ENCODE measurements at regions of chr2 and their contacts with region 1.

Region 1: DNA sequence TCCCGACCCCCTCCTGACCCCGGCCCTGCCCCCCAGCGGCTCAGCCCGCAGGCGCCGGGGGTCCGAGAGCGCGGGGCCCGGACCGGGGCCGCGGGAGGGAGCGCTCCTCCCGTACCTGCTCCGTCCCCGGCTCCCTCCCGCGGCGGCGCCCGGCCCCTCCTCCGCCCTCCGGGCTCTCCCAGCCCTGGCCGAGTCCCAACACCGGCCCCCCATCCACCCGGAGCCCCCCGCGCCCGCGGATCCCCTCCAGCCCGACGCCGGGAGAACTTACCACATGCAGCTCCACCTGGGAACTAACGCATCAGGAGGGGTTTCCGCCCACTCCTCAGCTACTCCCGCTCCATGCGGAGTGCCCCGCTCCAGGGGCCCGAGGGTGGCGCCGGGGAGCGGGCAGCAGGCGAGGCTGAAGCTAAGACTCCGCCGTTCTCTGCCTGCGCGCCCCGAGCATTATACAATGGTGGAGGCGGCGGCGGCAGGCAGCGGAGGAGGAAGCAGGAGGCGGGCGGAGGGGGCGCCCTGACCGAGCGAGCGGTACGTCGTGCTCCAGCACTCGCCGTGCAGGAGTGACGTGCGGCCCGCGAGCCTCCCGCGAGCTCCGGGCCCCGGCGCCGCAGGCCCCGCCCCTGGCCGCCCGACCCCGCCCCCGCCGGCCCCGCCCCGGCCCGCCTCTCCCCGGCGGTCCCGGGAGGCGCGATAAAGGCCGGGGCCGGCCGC is at the start of gene SERTAD2:
- DNase-seq: peak; percentile 91 to 96 (median 93)
- ATAC-seq: peak; percentile 75 to 93 (median 91)
- H3K4me3 ChIP-seq: peak within 1 kb of the TSS; percentile 74 to 95 (median 90)
- H3K27ac ChIP-seq: peak within 1 kb of the TSS; percentile 96 to 100 (median 99)
- H3K4me1 ChIP-seq: peaks cover 0 to 69% (median 41%) of the 10 kb centered on the region in 12 donors
- H3K27me3 ChIP-seq: no peaks in the 10 kb centered on the region
- CTCF ChIP-seq: peak in 5 of 12 donors; percentile 7 to 34 (median 16)
- POLR2A ChIP-seq: peak in 1 of 2 donors; percentile 79
- total RNA-seq, gene SERTAD2: 12.2 to 21.6 (median 16.1) TPM

Region 2: DNA sequence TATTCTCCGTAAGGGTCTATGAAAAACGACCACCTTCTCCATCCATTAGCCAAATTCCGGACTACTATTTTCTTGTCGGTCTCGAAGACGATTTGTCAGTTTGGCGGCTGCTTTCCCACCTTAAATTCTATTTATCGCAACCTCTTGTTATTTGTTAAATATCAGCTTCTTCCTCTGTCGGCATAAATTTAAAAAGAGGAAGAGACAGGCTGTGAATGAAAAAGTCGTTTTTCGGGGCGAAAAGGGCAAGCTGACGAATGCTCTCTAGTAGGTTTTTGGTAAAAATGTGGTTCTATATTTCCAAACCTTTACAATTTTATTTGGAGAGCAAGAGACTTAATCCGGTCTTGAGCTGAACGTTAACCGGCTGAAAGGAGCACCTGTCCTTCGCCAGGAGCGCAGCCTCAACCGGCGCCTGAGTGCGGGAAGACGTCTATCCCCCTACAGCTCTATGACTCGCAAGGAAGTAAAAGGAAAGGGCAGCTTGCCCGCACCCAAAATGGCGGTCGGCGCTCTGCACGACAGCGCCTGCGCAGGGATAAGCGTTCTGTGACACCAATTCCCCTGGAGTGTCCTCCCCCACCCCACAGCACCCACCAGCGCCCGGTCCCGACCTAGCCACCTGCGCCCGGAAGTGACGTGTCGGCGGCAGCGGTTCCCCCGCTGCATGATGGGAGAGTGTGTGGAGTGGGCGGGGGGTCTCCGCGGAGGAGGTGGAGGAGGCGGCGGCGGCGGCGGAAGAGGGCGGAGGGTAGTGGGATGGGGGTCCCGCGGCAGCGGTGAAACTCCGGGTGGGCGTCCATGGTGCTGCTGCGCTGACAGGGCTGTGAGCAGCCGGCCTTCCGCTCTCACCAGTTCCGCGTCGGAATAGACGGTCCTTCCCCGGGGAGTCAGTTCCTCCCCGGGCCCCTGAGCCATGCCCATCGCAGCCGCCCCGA is 129.6 kb before region 1 on chr2 and contains the start of gene AFTPH:
- intact Hi-C with region 1: loop called in 4 of 10 experiments (anchors 5 to 10 kb)
- DNase-seq: peak; percentile 99 to 100 (median 99)
- ATAC-seq: peak; percentile 99 to 100 (median 99)
- H3K4me3 ChIP-seq: peak within 1 kb of the TSS; percentile 70 to 97 (median 94)
- H3K27ac ChIP-seq: peak within 1 kb of the TSS; percentile 85 to 98 (median 94)
- H3K4me1 ChIP-seq: peaks cover 0 to 42% (median 28%) of the 10 kb centered on the region in 12 donors
- H3K27me3 ChIP-seq: no peaks in the 10 kb centered on the region
- CTCF ChIP-seq: no peak
- POLR2A ChIP-seq: peak in 1 of 2 donors; percentile 77
- total RNA-seq, gene AFTPH: 9.2 to 15.2 (median 11.4) TPM

Region 3: GRCh38 chr2:64695721-64696261 is 42.3 kb after region 1 on chr2:
- intact Hi-C with region 1: no loop called
- DNase-seq: no peak
- ATAC-seq: peak in 1 of 4 donors; percentile 49
- H3K4me3 ChIP-seq: no peak overlapping the region
- H3K27ac ChIP-seq: no peak overlapping the region
- H3K4me1 ChIP-seq: peaks cover 0 to 23% (median 0%) of the 10 kb centered on the region in 12 donors
- H3K27me3 ChIP-seq: no peaks in the 10 kb centered on the region
- CTCF ChIP-seq: no peak
- POLR2A ChIP-seq: no peak

Region 4: DNA sequence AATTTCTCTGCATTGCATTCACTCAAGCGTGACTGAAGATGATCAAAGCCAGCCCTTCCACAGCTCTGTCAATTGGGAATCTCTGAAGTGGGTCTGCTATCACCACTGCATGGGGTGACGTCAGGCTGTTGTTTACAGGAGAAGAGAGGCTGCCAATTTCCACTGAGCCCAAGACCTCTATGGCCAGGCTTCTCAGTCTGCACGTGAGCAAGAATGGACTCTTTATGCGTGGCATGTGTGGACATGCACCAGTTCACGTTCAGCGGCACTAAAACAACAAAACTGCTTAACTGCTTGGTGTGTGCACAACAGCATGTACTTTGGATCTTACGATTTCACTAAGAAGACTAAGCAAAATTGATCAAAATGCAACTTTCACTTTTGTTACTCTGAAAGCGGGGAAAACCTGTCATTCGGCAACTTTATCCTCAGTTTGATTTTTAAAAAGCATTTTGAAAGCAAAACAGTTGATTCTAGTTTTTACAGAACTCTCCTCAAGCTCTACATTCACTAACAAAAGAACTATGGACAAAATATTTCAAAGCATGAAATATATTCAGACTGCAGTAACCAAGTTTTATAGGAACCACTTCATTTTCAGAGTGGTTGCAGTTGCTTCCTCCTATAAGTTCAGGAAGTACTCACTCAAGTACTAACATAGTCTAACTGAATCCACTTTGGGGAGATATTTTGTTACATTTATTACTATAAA is 77.2 kb after region 1 on chr2:
- intact Hi-C with region 1: loop called in 1 of 10 experiments (anchors 5 kb)
- DNase-seq: peak in 4 of 5 donors; percentile 50 to 77 (median 66)
- ATAC-seq: peak; percentile 73 to 93 (median 90)
- H3K4me3 ChIP-seq: peak overlapping the region in 11 of 12 donors; percentile 3 to 60 (median 47)
- H3K27ac ChIP-seq: peak overlapping the region in 11 of 12 donors; percentile 29 to 92 (median 60)
- H3K4me1 ChIP-seq: peaks cover 0 to 52% (median 10%) of the 10 kb centered on the region in 12 donors
- H3K27me3 ChIP-seq: no peaks in the 10 kb centered on the region
- CTCF ChIP-seq: no peak
- POLR2A ChIP-seq: no peak

Region 5: GRCh38 chr2:64767670-64768468 is 114.4 kb after region 1 on chr2:
- intact Hi-C with region 1: loop called in 8 of 10 experiments (anchors 5 kb)
- DNase-seq: peak; percentile 93 to 95 (median 93)
- ATAC-seq: peak; percentile 94 to 97 (median 96)
- H3K4me3 ChIP-seq: peak overlapping the region; percentile 34 to 94 (median 77)
- H3K27ac ChIP-seq: peak overlapping the region; percentile 91 to 100 (median 98)
- H3K4me1 ChIP-seq: peaks cover 0 to 39% (median 21%) of the 10 kb centered on the region in 12 donors
- H3K27me3 ChIP-seq: no peaks in the 10 kb centered on the region
- CTCF ChIP-seq: peak in 6 of 12 donors; percentile 6 to 38 (median 16)
- POLR2A ChIP-seq: peak; percentile 38 to 93

Region 6: GRCh38 chr2:64859312-64860212 is 206.1 kb after region 1 on chr2:
- intact Hi-C with region 1: loop called in 5 of 10 experiments (anchors 2 kb)
- DNase-seq: peak; percentile 87 to 95 (median 93)
- ATAC-seq: peak; percentile 76 to 88 (median 84)
- H3K4me3 ChIP-seq: peak overlapping the region; percentile 0 to 62 (median 54)
- H3K27ac ChIP-seq: peak overlapping the region; percentile 90 to 99 (median 94)
- H3K4me1 ChIP-seq: peaks cover 13 to 87% (median 36%) of the 10 kb centered on the region in 12 donors
- H3K27me3 ChIP-seq: no peaks in the 10 kb centered on the region
- CTCF ChIP-seq: peak in 2 of 12 donors; percentile 6 to 14
- POLR2A ChIP-seq: peak in 1 of 2 donors; percentile 45

Measured in heart left ventricle (tissue), 16 donors.